CD4-positive, alpha-beta memory T cell (primary cell): ENCODE measurements at regions of chr2 and their contacts with region 1.

Region 1: GRCh38 chr2:209977386-209978239 is 24.8 kb upstream of the RPE start:
- DNase-seq: peak in 4 of 5 donors; percentile 35 to 52 (median 43)
- H3K4me3 ChIP-seq: no peak overlapping the region
- H3K4me3 Mint-ChIP-seq: no peak overlapping the region
- H3K27ac ChIP-seq: no peak overlapping the region
- H3K27ac Mint-ChIP-seq: no peak overlapping the region
- H3K4me1 ChIP-seq: no peaks in the 10 kb centered on the region
- H3K4me1 Mint-ChIP-seq: no peaks in the 10 kb centered on the region
- H3K27me3 ChIP-seq: no peaks in the 10 kb centered on the region
- H3K27me3 Mint-ChIP-seq: peaks cover 4 to 9% of the 10 kb centered on the region in 2 donors

Region 2: GRCh38 chr2:210189452-210190143 is 212.0 kb after region 1 on chr2:
- CTCF ChIA-PET with region 1: interaction called, 190 read pairs
- POLR2A ChIA-PET with region 1: no interaction called
- intact Hi-C with region 1: no loop called
- DNase-seq: no peak
- H3K4me3 ChIP-seq: no peak overlapping the region
- H3K4me3 Mint-ChIP-seq: no peak overlapping the region
- H3K27ac ChIP-seq: no peak overlapping the region
- H3K27ac Mint-ChIP-seq: no peak overlapping the region
- H3K4me1 ChIP-seq: no peaks in the 10 kb centered on the region
- H3K4me1 Mint-ChIP-seq: no peaks in the 10 kb centered on the region
- H3K27me3 ChIP-seq: no peaks in the 10 kb centered on the region
- H3K27me3 Mint-ChIP-seq: peaks cover 7 to 11% of the 10 kb centered on the region in 2 donors

Region 3: GRCh38 chr2:210203157-210203947 is 225.7 kb after region 1 on chr2:
- CTCF ChIA-PET with region 1: interaction called, 190 read pairs
- POLR2A ChIA-PET with region 1: no interaction called
- intact Hi-C with region 1: loop called (anchors 1 kb)
- DNase-seq: no peak
- H3K4me3 ChIP-seq: no peak overlapping the region
- H3K4me3 Mint-ChIP-seq: no peak overlapping the region
- H3K27ac ChIP-seq: no peak overlapping the region
- H3K27ac Mint-ChIP-seq: no peak overlapping the region
- H3K4me1 ChIP-seq: no peaks in the 10 kb centered on the region
- H3K4me1 Mint-ChIP-seq: no peaks in the 10 kb centered on the region
- H3K27me3 ChIP-seq: no peaks in the 10 kb centered on the region
- H3K27me3 Mint-ChIP-seq: peaks cover 14 to 17% of the 10 kb centered on the region in 2 donors

Region 4: GRCh38 chr2:210399440-210400041 is 421.9 kb after region 1 on chr2:
- CTCF ChIA-PET with region 1: no interaction called
- POLR2A ChIA-PET with region 1: no interaction called
- intact Hi-C with region 1: loop called (anchors 2 kb)
- DNase-seq: peak in 1 of 5 donors; percentile 1
- H3K4me3 ChIP-seq: no peak overlapping the region
- H3K4me3 Mint-ChIP-seq: peak overlapping the region in 1 of 8 donors; percentile 43
- H3K27ac ChIP-seq: no peak overlapping the region
- H3K27ac Mint-ChIP-seq: no peak overlapping the region
- H3K4me1 ChIP-seq: no peaks in the 10 kb centered on the region
- H3K4me1 Mint-ChIP-seq: peaks cover 0 to 3% (median 0%) of the 10 kb centered on the region in 4 donors
- H3K27me3 ChIP-seq: no peaks in the 10 kb centered on the region
- H3K27me3 Mint-ChIP-seq: peaks cover 2 to 4% of the 10 kb centered on the region in 2 donors

Region 5: DNA sequence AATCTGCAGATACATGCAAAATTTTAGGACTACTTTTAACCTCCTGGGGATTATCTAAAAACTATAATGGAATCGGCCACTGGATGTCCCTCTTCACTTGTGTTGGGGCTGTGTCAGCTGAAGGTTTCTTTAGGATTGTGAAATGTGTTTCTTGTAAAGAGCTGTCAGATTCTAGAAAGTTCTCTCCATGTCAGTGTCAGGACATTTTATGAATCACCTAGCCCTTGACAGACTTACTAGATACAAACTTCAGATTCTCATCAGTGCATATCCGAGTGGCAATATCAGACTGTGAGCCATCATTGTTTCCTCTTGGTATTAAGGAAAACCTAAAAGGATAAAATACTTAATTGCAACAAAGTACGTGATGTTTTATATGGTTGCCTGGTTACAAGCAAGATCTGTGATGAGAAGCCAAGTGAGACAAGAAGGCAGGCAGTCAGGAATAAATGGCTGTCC is 686.0 kb after region 1 on chr2:
- CTCF ChIA-PET with region 1: no interaction called
- POLR2A ChIA-PET with region 1: no interaction called
- intact Hi-C with region 1: no loop called
- DNase-seq: no peak
- H3K4me3 ChIP-seq: no peak overlapping the region
- H3K4me3 Mint-ChIP-seq: no peak overlapping the region
- H3K27ac ChIP-seq: no peak overlapping the region
- H3K27ac Mint-ChIP-seq: no peak overlapping the region
- H3K4me1 ChIP-seq: no peaks in the 10 kb centered on the region
- H3K4me1 Mint-ChIP-seq: no peaks in the 10 kb centered on the region
- H3K27me3 ChIP-seq: no peaks in the 10 kb centered on the region
- H3K27me3 Mint-ChIP-seq: no peaks in the 10 kb centered on the region